A549 (cell line): ENCODE measurements at regions of chr19 and their contacts with region 1.

Region 1: DNA sequence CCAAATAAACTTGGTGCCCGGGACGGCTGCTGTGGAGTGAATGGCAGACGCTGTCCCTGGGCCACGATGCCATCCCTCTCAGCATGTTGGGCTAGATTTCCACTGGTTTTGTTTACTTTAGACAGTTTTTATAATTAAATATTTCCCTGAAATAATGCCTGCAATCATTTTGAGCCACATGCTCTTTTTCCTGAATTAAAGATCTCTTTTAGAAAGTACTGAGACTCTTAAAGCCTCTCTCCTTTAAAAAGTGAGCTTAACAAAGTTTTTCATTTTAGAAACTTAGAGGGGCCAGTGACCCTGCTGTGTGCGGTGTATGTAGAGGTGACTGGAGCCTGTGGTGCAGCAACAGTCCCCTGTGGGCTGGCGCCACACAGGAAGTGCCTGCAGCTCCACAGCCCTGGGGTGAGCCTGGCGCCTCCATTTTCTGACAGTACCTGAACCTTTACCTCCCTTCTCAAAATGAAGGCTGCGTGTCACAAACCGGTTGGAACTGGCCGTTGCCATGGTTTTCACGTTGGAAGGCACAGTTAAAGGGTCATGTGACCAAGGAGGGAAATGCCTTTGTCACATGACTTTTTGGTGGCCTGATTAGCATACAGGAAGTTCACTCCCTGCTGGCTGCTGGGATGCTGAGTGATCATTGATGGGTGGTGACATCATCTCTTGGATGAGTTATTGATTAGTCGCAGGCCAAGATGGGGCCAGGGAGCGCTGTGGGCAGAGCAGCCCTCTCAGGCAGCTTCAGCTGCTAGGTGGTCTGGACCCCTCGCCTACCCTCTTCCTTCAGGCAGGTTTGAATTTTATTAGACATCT is 26.3 kb downstream of the TSSK6 start:
- DNase-seq: peak; percentile 38 to 69
- ATAC-seq: peak; percentile 35 to 44; a peak in 5 of 6 replicates
- H3K4me3 ChIP-seq: no peak overlapping the region
- H3K27ac ChIP-seq: peak overlapping the region; percentile 30 to 72; a peak in 4 of 6 replicates
- H3K4me1 ChIP-seq: peaks cover 20% of the 10 kb centered on the region; the same call in 2 of the 3 replicates
- CTCF ChIP-seq: no peak
- EP300 ChIP-seq: no peak
- POLR2A ChIP-seq: no peak
- RAD21 ChIP-seq: no peak

Region 2: GRCh38 chr19:19361075-19361594 is 127.9 kb before region 1 on chr19:
- CTCF ChIA-PET with region 1: interaction called, 53 read pairs
- POLR2A ChIA-PET with region 1: no interaction called
- DNase-seq: peak; percentile 70 to 84
- ATAC-seq: peak; percentile 86 to 89
- H3K4me3 ChIP-seq: no peak overlapping the region
- H3K27ac ChIP-seq: peak overlapping the region in 1 of 2 experiments; percentile 49; a peak in 1 of 6 replicates
- H3K4me1 ChIP-seq: 0 out of 3 replicates have a peak, but pooled peaks cover 4% of the 10 kb centered on the region
- CTCF ChIP-seq: peak; percentile 46
- EP300 ChIP-seq: no peak
- POLR2A ChIP-seq: no peak
- RAD21 ChIP-seq: 0 out of 5 replicates have a peak, but pooled peaks of 1 of the 2 experiments have one; percentile 27

Region 3: DNA sequence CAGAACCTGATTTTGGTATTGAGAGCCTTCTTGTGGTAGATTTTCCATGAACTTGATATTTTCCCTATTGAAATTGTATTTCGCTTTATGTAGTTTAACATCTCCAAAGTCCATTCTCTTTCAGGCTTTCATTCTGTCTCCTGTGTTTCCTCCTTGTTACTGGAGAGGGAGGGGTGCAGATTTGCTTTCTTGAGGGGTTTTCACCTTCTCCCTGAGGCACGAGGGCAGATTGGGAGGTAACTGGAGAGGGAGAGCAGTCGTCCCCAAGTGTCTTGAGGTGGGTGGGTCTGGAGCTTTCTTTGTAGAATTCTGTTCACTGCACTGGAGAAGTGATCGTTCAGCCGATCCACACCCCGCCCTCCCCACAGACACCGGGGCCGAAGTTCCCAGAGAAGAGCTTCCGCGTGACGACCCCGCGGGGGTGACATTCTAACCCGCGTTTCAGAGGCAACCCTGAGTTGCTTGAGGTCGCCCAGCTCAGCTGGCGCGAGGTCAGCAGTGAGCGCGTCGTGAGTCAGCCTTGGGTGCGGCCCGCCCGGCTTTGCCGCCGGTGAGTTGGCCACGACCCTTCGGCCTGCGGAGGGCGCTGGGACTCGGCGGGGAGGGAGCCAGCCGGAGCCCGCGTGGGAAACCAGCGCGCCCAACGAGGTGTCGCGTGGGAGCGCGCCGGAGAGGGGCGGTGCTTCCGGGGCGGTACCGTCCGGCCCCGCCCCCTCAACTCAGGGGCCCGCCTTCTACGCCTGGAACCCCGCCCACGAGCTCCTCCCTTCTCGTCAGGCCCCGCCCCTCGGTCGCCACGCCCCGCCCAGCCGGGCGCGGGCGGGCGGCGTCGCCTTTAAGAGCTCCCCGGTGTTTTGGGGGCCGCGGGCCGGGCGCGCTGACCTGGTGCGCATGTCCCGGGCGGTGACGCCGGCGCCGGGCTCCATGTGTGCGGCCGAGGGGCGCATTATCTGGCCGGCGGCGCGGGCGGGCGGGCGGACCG is 83.9 kb before region 1 on chr19 and contains the start of gene GATAD2A:
- CTCF ChIA-PET with region 1: interaction called, 10 read pairs
- POLR2A ChIA-PET with region 1: no interaction called
- DNase-seq: peak; percentile 32 to 87
- ATAC-seq: peak; percentile 81 to 88
- H3K4me3 ChIP-seq: peak within 1 kb of the TSS; percentile 97
- H3K27ac ChIP-seq: peak within 1 kb of the TSS; percentile 89 to 97
- H3K4me1 ChIP-seq: peaks cover 33% of the 10 kb centered on the region
- CTCF ChIP-seq: no peak
- EP300 ChIP-seq: no peak
- POLR2A ChIP-seq: no peak; the same call in none of the 2 replicates
- RAD21 ChIP-seq: no peak; a peak in 1 of 5 replicates
- polyA plus RNA-seq, gene GATAD2A: 12.5 and 25.2 TPM in 2 replicates

Region 4: DNA sequence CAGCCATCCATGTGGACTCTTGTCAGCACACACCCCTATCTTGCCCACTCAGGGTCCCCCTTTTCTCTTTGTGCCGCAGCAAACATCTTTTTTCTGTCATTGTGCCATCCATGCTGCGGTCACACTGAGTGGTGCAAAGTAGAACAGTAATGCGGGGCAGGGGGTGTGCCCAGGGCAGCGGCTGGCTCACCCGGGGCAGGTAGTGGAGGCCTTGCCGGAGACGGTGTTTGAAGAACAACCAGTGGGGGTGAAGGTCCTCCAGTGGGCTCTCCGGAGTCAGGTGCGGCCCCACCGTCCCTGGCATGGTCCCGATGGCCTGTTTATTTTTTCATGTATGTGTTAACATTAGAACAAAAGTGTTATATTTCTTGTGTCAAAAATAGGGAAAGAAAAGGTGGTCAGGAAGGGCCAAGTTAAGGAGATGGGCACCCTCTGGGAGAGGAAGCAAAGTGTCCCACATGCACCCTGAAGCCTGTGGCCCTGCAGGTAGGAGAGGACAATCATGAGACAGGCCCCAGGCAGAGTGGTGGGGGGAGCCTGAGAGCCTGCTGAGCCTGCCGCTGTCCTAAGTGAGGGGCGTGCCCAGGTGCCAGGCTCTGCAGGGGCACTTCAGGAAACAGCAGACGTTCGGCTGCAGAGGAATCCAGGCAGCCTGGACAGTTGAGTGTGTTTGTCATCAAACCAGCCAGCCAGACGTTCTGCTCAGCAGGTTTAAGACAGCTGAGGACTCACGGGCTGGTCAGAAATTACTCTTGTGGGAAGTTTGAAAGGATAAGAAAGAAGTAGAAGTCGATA is 13.9 kb after region 1 on chr19:
- CTCF ChIA-PET with region 1: interaction called, 18 read pairs
- POLR2A ChIA-PET with region 1: no interaction called
- DNase-seq: no peak
- ATAC-seq: no peak
- H3K4me3 ChIP-seq: no peak overlapping the region
- H3K27ac ChIP-seq: no peak overlapping the region
- H3K4me1 ChIP-seq: no peaks in the 10 kb centered on the region
- CTCF ChIP-seq: no peak
- EP300 ChIP-seq: no peak
- POLR2A ChIP-seq: no peak
- RAD21 ChIP-seq: no peak